IMR-90 (cell line): ENCODE measurements at regions of chr1 and their contacts with region 1.

Region 1: DNA sequence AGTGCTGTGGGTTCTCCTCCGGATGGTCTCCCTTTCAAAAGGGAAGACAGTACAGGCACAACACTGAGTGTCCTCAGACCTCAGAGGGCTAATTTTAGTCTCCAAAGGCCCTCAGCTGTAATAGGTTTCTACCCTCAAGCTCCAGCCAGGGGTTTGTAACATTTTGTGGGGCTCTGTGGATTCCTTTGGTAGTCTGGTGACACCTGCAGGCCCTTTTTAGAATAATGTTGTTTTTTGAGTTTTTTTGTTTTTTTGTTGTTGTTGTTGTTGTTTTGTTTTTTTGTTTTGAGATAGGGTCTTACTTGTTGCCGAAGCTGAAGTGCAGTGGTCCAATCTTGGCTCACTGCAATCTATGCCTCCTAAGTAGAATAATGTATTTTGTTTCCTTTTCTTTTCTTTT is 15.0 kb upstream of the TMEM201 start:
- DNase-seq: peak; percentile 25
- ATAC-seq: no peak
- H3K4me3 ChIP-seq: no peak overlapping the region
- H3K27ac ChIP-seq: no peak overlapping the region
- H3K4me1 ChIP-seq: no peaks in the 10 kb centered on the region
- H3K27me3 ChIP-seq: no peaks in the 10 kb centered on the region
- CTCF ChIP-seq: peak; percentile 47
- POLR2A ChIP-seq: no peak
- RAD21 ChIP-seq: peak; percentile 53

Region 2: GRCh38 chr1:9275567-9276034 is 298.1 kb before region 1 on chr1:
- CTCF ChIA-PET with region 1: no interaction called
- POLR2A ChIA-PET with region 1: no interaction called
- dilution Hi-C with region 1: no loop called
- in situ Hi-C with region 1: loop called (anchors 10 kb)
- intact Hi-C with region 1: no loop called
- DNase-seq: peak; percentile 92
- ATAC-seq: peak; percentile 84
- H3K4me3 ChIP-seq: no peak overlapping the region
- H3K27ac ChIP-seq: no peak overlapping the region
- H3K4me1 ChIP-seq: peaks cover 28% of the 10 kb centered on the region
- H3K27me3 ChIP-seq: no peaks in the 10 kb centered on the region
- CTCF ChIP-seq: no peak
- POLR2A ChIP-seq: no peak
- RAD21 ChIP-seq: no peak

Region 3: DNA sequence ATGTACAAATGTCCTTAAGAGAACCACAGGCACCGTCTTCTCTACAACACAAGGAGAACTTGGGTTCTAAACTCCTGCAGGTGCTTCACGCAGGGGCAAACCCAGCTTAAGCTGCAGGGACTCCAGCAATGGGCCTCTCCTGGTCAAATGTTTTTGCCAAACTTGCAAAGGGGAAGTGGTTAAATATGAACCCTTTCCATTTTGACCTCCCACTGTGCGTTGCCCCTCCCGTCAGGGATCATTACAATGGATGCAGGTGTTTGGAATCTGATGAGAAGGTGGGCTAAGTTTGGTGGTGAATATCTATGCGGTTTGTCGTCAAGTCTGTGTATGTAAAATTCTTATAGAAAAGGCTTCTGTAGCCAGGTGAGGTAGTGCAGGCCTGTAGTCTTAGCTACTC is 63.6 kb before region 1 on chr1:
- CTCF ChIA-PET with region 1: no interaction called
- POLR2A ChIA-PET with region 1: no interaction called
- dilution Hi-C with region 1: no loop called
- in situ Hi-C with region 1: no loop called
- intact Hi-C with region 1: no loop called
- DNase-seq: no peak
- ATAC-seq: no peak
- H3K4me3 ChIP-seq: no peak overlapping the region
- H3K27ac ChIP-seq: no peak overlapping the region
- H3K4me1 ChIP-seq: no peaks in the 10 kb centered on the region
- H3K27me3 ChIP-seq: peaks cover 28% of the 10 kb centered on the region
- CTCF ChIP-seq: no peak
- POLR2A ChIP-seq: no peak
- RAD21 ChIP-seq: no peak